ENCODE measurements at regions of chr19 and their contacts with region 1.

Region 1: DNA sequence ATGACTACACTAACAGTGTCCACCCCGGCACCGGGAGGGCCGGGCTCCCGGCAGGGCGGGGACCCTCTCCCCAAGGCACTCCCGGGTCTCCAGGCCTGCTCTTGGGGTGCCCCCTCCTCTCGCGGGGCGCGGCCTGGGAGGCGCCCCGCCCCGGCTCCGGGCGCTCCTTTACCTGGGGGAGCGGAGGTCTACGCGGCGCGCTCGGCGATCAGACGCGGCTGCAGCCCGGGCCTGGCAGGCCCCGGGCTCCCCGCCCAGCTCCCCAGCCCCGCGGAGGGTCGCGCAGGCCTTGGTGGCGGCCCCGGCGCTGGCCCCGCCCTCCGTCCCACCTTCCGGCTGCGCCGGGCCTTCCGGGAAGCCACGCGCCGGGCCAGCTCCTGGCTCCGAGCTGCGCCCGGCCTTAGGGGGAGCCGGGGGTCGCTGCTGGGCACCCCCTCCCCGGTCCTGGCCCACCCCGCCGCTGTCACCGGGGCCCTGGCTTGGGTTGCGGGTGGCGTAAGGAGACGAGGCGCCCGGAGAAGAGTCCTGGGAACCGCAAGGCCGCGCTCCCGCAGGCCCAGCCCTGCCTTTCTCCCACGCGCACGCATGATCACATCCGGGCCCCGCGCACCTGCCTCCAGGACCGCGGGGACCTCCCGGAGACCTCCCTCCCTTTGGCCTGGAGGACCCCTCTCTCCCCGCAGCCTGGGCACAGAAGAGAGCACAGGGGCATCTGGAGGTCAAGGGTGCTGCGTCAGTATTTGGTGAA is at the start of gene C19orf12:
- DNase-seq: peak; percentile 29 to 75 (median 48)
- ATAC-seq: peak; percentile 54
- H3K4me3 ChIP-seq: peak within 1 kb of the TSS; percentile 69
- H3K4me3 Mint-ChIP-seq: peak within 1 kb of the TSS; percentile 91
- H3K27ac ChIP-seq: peak within 1 kb of the TSS; percentile 83 to 90
- H3K27ac Mint-ChIP-seq: peak within 1 kb of the TSS; percentile 89
- H3K4me1 ChIP-seq: peaks cover 62% of the 10 kb centered on the region
- H3K4me1 Mint-ChIP-seq: peaks cover 60% of the 10 kb centered on the region
- H3K27me3 ChIP-seq: no peaks in the 10 kb centered on the region
- H3K27me3 Mint-ChIP-seq: no peaks in the 10 kb centered on the region
- CTCF ChIP-seq: no peak
- total RNA-seq, gene C19orf12: 7.7 TPM

Region 2: GRCh38 chr19:29596885-29597525 is 118.1 kb before region 1 on chr19:
- CTCF ChIA-PET with region 1: no interaction called
- POLR2A ChIA-PET with region 1: no interaction called
- intact Hi-C with region 1: no loop called
- DNase-seq: peak in 2 of 14 experiments; percentile 4 to 14
- ATAC-seq: no peak
- H3K4me3 ChIP-seq: no peak overlapping the region
- H3K4me3 Mint-ChIP-seq: no peak overlapping the region
- H3K27ac ChIP-seq: no peak overlapping the region
- H3K27ac Mint-ChIP-seq: no peak overlapping the region
- H3K4me1 ChIP-seq: no peaks in the 10 kb centered on the region
- H3K4me1 Mint-ChIP-seq: no peaks in the 10 kb centered on the region
- H3K27me3 ChIP-seq: peaks cover 3 to 10% of the 10 kb centered on the region in 2 experiments
- H3K27me3 Mint-ChIP-seq: peaks cover 33% of the 10 kb centered on the region
- CTCF ChIP-seq: peak; percentile 36

Region 3: GRCh38 chr19:29665215-29665825 is 49.8 kb before region 1 on chr19 and contains the start of gene PLEKHF1:
- CTCF ChIA-PET with region 1: interaction called, 33 read pairs
- POLR2A ChIA-PET with region 1: interaction called, 85 read pairs
- intact Hi-C with region 1: loop called in 1 of 2 experiments (anchors 2 kb)
- DNase-seq: peak; percentile 52 to 91 (median 78)
- ATAC-seq: peak; percentile 63
- H3K4me3 ChIP-seq: peak within 1 kb of the TSS; percentile 97
- H3K4me3 Mint-ChIP-seq: peak within 1 kb of the TSS; percentile 93
- H3K27ac ChIP-seq: peak within 1 kb of the TSS; percentile 67 to 85
- H3K27ac Mint-ChIP-seq: peak within 1 kb of the TSS; percentile 98
- H3K4me1 ChIP-seq: peaks cover 58% of the 10 kb centered on the region
- H3K4me1 Mint-ChIP-seq: peaks cover 76% of the 10 kb centered on the region
- H3K27me3 ChIP-seq: no peaks in the 10 kb centered on the region
- H3K27me3 Mint-ChIP-seq: no peaks in the 10 kb centered on the region
- CTCF ChIP-seq: peak; percentile 17
- total RNA-seq, gene PLEKHF1: 37.5 to 41.0 TPM

Region 4: GRCh38 chr19:29680447-29680846 is 34.7 kb before region 1 on chr19:
- CTCF ChIA-PET with region 1: interaction called, 11 read pairs
- POLR2A ChIA-PET with region 1: interaction called, 102 read pairs
- intact Hi-C with region 1: no loop called
- DNase-seq: peak; percentile 67 to 93 (median 79)
- ATAC-seq: peak; percentile 87
- H3K4me3 ChIP-seq: peak overlapping the region; percentile 22
- H3K4me3 Mint-ChIP-seq: peak overlapping the region; percentile 76
- H3K27ac ChIP-seq: peak overlapping the region; percentile 44 to 61
- H3K27ac Mint-ChIP-seq: peak overlapping the region; percentile 93
- H3K4me1 ChIP-seq: peaks cover 85% of the 10 kb centered on the region
- H3K4me1 Mint-ChIP-seq: peaks cover 76% of the 10 kb centered on the region
- H3K27me3 ChIP-seq: no peaks in the 10 kb centered on the region
- H3K27me3 Mint-ChIP-seq: no peaks in the 10 kb centered on the region
- CTCF ChIP-seq: no peak

Region 5: GRCh38 chr19:29745253-29745652 is 30.1 kb after region 1 on chr19:
- CTCF ChIA-PET with region 1: no interaction called
- POLR2A ChIA-PET with region 1: no interaction called
- intact Hi-C with region 1: no loop called
- DNase-seq: no peak
- ATAC-seq: no peak
- H3K4me3 ChIP-seq: no peak overlapping the region
- H3K4me3 Mint-ChIP-seq: no peak overlapping the region
- H3K27ac ChIP-seq: no peak overlapping the region
- H3K27ac Mint-ChIP-seq: no peak overlapping the region
- H3K4me1 ChIP-seq: no peaks in the 10 kb centered on the region
- H3K4me1 Mint-ChIP-seq: no peaks in the 10 kb centered on the region
- H3K27me3 ChIP-seq: no peaks in the 10 kb centered on the region
- H3K27me3 Mint-ChIP-seq: peaks cover 4% of the 10 kb centered on the region
- CTCF ChIP-seq: no peak

Region 6: GRCh38 chr19:29771708-29772414 is 56.7 kb after region 1 on chr19:
- CTCF ChIA-PET with region 1: no interaction called
- POLR2A ChIA-PET with region 1: no interaction called
- intact Hi-C with region 1: no loop called
- DNase-seq: peak in 8 of 14 experiments; percentile 12 to 56 (median 36)
- ATAC-seq: no peak
- H3K4me3 ChIP-seq: no peak overlapping the region
- H3K4me3 Mint-ChIP-seq: no peak overlapping the region
- H3K27ac ChIP-seq: no peak overlapping the region
- H3K27ac Mint-ChIP-seq: no peak overlapping the region
- H3K4me1 ChIP-seq: no peaks in the 10 kb centered on the region
- H3K4me1 Mint-ChIP-seq: no peaks in the 10 kb centered on the region
- H3K27me3 ChIP-seq: no peaks in the 10 kb centered on the region
- H3K27me3 Mint-ChIP-seq: no peaks in the 10 kb centered on the region
- CTCF ChIP-seq: no peak

Region 7: GRCh38 chr19:29844891-29845572 is 129.9 kb after region 1 on chr19:
- CTCF ChIA-PET with region 1: interaction called, 3 read pairs
- POLR2A ChIA-PET with region 1: interaction called, 24 read pairs
- intact Hi-C with region 1: no loop called
- DNase-seq: peak; percentile 94 to 99 (median 96)
- ATAC-seq: peak; percentile 80
- H3K4me3 ChIP-seq: peak overlapping the region; percentile 99
- H3K4me3 Mint-ChIP-seq: peak overlapping the region; percentile 95
- H3K27ac ChIP-seq: peak overlapping the region; percentile 76
- H3K27ac Mint-ChIP-seq: peak overlapping the region; percentile 93
- H3K4me1 ChIP-seq: peaks cover 24% of the 10 kb centered on the region
- H3K4me1 Mint-ChIP-seq: peaks cover 22% of the 10 kb centered on the region
- H3K27me3 ChIP-seq: no peaks in the 10 kb centered on the region
- H3K27me3 Mint-ChIP-seq: no peaks in the 10 kb centered on the region
- CTCF ChIP-seq: no peak

Region 8: DNA sequence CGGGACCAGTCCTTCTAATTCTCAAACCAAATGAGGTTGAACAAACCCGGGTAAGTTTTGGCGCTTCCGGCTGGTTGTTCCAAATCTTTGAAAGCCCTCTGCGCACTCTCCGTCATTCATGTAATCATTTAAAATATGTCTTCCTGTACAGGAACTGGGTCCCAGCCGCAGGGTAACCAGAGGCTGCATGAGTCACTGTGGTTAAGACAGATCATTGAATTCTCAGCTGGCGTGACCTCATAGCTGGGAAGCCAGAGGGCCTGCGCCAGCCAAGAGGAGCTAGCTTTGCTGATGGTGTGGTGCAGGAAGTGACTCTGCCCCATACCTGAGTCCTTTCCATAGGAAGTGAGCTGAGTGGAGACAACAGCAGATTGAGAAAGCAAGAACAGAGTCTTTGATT is 1499.0 kb after region 1 on chr19:
- CTCF ChIA-PET with region 1: no interaction called
- POLR2A ChIA-PET with region 1: no interaction called
- intact Hi-C with region 1: loop called in 1 of 2 experiments (anchors 10 kb)
- DNase-seq: peak; percentile 63 to 95 (median 79)
- ATAC-seq: peak; percentile 94
- H3K4me3 ChIP-seq: no peak overlapping the region
- H3K4me3 Mint-ChIP-seq: peak overlapping the region; percentile 54
- H3K27ac ChIP-seq: peak overlapping the region in 1 of 2 donors; percentile 42
- H3K27ac Mint-ChIP-seq: peak overlapping the region; percentile 83
- H3K4me1 ChIP-seq: peaks cover 16% of the 10 kb centered on the region
- H3K4me1 Mint-ChIP-seq: peaks cover 26% of the 10 kb centered on the region
- H3K27me3 ChIP-seq: no peaks in the 10 kb centered on the region
- H3K27me3 Mint-ChIP-seq: no peaks in the 10 kb centered on the region
- CTCF ChIP-seq: no peak

Measured in CD4-positive, alpha-beta T cell (primary cell).